Activated naive CD4-positive, alpha-beta T cell treated with anti-CD3 and anti-CD28 coated beads for 36 hours (primary cell): ENCODE measurements at regions of chr21 and their contacts with region 1.

Region 1: DNA sequence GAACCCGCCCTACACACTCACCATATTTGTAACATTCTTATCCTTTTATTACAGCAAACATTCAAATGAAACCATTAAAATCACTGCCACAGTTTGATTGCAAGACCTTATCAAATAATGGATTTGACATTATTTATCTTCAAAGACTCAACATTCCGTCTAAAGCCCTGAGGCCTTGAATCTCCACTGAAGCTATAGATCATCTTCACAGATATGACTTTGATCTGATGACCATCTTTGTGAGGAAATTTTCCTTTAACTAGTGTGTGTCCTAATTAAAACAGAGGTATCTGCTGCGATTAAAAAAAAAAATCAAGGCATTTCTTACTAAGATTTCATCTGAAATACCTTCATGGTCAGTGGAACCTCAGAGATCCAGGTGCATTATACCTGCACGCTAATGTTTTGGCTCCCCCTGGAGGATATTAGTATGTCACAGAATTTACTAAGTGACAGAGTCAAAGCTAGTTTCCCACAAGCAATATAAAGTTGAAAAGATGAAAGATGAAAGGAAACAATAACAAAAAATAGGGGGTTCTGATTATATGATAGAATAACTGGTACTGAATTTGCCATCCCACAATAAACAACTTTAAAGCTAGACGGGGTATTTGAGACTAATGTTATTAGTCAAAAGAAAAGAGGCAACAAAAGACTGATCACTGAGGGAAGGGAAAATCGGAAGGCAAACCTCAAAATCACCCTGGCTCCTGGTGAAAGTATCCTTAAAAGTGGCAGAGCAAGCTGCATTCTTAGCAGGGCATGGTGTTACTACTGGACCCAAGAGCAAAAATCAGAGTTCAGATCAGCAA is 923.4 kb downstream of the NCAM2 start:
- DNase-seq: no peak
- H3K4me3 Mint-ChIP-seq: no peak overlapping the region
- H3K27ac Mint-ChIP-seq: no peak overlapping the region
- H3K4me1 Mint-ChIP-seq: no peaks in the 10 kb centered on the region
- H3K27me3 Mint-ChIP-seq: peaks cover 4% of the 10 kb centered on the region

Region 2: GRCh38 chr21:21163904-21164303 is 757.7 kb before region 1 on chr21:
- CTCF ChIA-PET with region 1: no interaction called
- intact Hi-C with region 1: loop called (anchors 1 kb)
- DNase-seq: peak; percentile 51
- H3K4me3 Mint-ChIP-seq: no peak overlapping the region
- H3K27ac Mint-ChIP-seq: no peak overlapping the region
- H3K4me1 Mint-ChIP-seq: no peaks in the 10 kb centered on the region
- H3K27me3 Mint-ChIP-seq: no peaks in the 10 kb centered on the region

Region 3: GRCh38 chr21:21232320-21232719 is 689.3 kb before region 1 on chr21:
- CTCF ChIA-PET with region 1: interaction called, 3 read pairs
- intact Hi-C with region 1: loop called (anchors 10 kb)
- DNase-seq: no peak
- H3K4me3 Mint-ChIP-seq: no peak overlapping the region
- H3K27ac Mint-ChIP-seq: no peak overlapping the region
- H3K4me1 Mint-ChIP-seq: no peaks in the 10 kb centered on the region
- H3K27me3 Mint-ChIP-seq: no peaks in the 10 kb centered on the region

Region 4: DNA sequence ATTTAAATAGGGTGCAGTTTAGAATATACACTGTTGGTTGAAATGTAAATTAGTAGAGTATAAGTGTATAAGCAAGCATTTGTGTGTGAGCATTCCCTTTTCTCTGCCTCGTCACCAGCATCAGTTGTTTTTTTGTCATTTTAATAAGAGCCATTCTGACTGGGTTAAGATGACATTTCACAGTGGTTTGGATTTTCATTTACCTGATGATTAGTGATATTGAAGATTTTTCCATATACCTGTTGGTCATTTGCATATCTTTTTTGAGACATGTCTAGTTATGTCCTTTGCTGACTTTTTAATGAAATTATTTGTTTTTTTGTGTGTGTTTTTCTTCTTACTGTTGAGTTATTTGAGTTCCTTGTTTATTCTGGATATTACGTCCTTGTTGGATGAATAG is 32.7 kb before region 1 on chr21:
- CTCF ChIA-PET with region 1: no interaction called
- intact Hi-C with region 1: no loop called
- DNase-seq: no peak
- H3K4me3 Mint-ChIP-seq: no peak overlapping the region
- H3K27ac Mint-ChIP-seq: no peak overlapping the region
- H3K4me1 Mint-ChIP-seq: no peaks in the 10 kb centered on the region
- H3K27me3 Mint-ChIP-seq: no peaks in the 10 kb centered on the region

Region 5: GRCh38 chr21:22019766-22020165 is 98.1 kb after region 1 on chr21:
- CTCF ChIA-PET with region 1: no interaction called
- intact Hi-C with region 1: no loop called
- DNase-seq: no peak
- H3K4me3 Mint-ChIP-seq: no peak overlapping the region
- H3K27ac Mint-ChIP-seq: no peak overlapping the region
- H3K4me1 Mint-ChIP-seq: no peaks in the 10 kb centered on the region
- H3K27me3 Mint-ChIP-seq: no peaks in the 10 kb centered on the region

Region 6: GRCh38 chr21:22399738-22400514 is 478.3 kb after region 1 on chr21:
- CTCF ChIA-PET with region 1: no interaction called
- intact Hi-C with region 1: no loop called
- DNase-seq: no peak
- H3K4me3 Mint-ChIP-seq: no peak overlapping the region
- H3K27ac Mint-ChIP-seq: no peak overlapping the region
- H3K4me1 Mint-ChIP-seq: no peaks in the 10 kb centered on the region
- H3K27me3 Mint-ChIP-seq: no peaks in the 10 kb centered on the region